Endothelial cell of umbilical vein (primary cell): ENCODE measurements at regions of chr18 and their contacts with region 1.

Region 1: GRCh38 chr18:29147944-29148343 is 971.0 kb upstream of the CDH2 start:
- DNase-seq: peak; percentile 45
- H3K4me3 ChIP-seq: no peak overlapping the region
- H3K27ac ChIP-seq: no peak overlapping the region
- H3K4me1 ChIP-seq: peaks cover 1% of the 10 kb centered on the region
- H3K27me3 ChIP-seq: no peaks in the 10 kb centered on the region
- CTCF ChIP-seq: no peak
- POLR2A ChIP-seq: no peak

Region 2: GRCh38 chr18:29198834-29199233 is 50.9 kb after region 1 on chr18:
- CTCF ChIA-PET with region 1: no interaction called
- POLR2A ChIA-PET with region 1: no interaction called
- dilution Hi-C with region 1: no loop called
- intact Hi-C with region 1: loop called (anchors 10 kb)
- DNase-seq: no peak
- H3K4me3 ChIP-seq: no peak overlapping the region
- H3K27ac ChIP-seq: no peak overlapping the region
- H3K4me1 ChIP-seq: no peaks in the 10 kb centered on the region
- H3K27me3 ChIP-seq: no peaks in the 10 kb centered on the region
- CTCF ChIP-seq: no peak
- POLR2A ChIP-seq: no peak

Region 3: GRCh38 chr18:29418136-29418535 is 270.2 kb after region 1 on chr18:
- CTCF ChIA-PET with region 1: no interaction called
- POLR2A ChIA-PET with region 1: no interaction called
- dilution Hi-C with region 1: no loop called
- intact Hi-C with region 1: no loop called
- DNase-seq: no peak
- H3K4me3 ChIP-seq: no peak overlapping the region
- H3K27ac ChIP-seq: no peak overlapping the region
- H3K4me1 ChIP-seq: no peaks in the 10 kb centered on the region
- H3K27me3 ChIP-seq: no peaks in the 10 kb centered on the region
- CTCF ChIP-seq: no peak
- POLR2A ChIP-seq: no peak